Activated CD4-positive, alpha-beta T cell treated with anti-CD3 and anti-CD28 coated beads for 36 hours (primary cell): ENCODE measurements at regions of chr11 and their contacts with region 1.

Region 1: DNA sequence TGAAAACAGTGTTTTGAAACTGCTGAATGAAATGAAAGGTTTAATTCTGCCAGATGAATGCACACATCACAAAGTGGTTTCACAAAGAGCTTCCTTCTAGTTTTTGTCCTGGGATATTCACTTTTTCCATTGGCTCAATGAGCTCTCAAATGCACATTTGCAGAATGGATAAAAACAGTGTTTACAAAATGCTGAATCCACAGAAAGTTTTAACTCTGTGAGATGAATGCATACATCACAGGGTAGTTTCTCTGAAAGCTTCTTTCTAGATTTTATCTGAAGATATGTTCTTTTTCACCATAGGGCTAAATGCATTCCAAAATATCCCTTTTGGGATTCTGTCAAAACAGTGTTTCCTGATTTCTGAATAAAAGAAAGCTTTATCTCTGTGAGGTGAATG is 237.6 kb downstream of the OR4A5 start:
- DNase-seq: no peak
- ATAC-seq: no peak
- H3K4me3 Mint-ChIP-seq: no peak overlapping the region
- H3K27ac Mint-ChIP-seq: no peak overlapping the region
- H3K4me1 Mint-ChIP-seq: no peaks in the 10 kb centered on the region
- H3K27me3 Mint-ChIP-seq: no peaks in the 10 kb centered on the region

Region 2: GRCh38 chr11:54558919-54559318 is 385.3 kb before region 1 on chr11:
- CTCF ChIA-PET with region 1: no interaction called
- POLR2A ChIA-PET with region 1: no interaction called
- intact Hi-C with region 1: no loop called
- DNase-seq: no peak
- ATAC-seq: no peak
- H3K4me3 Mint-ChIP-seq: no peak overlapping the region
- H3K27ac Mint-ChIP-seq: no peak overlapping the region
- H3K4me1 Mint-ChIP-seq: no peaks in the 10 kb centered on the region
- H3K27me3 Mint-ChIP-seq: no peaks in the 10 kb centered on the region

Region 3: GRCh38 chr11:54985731-54986130 is 41.5 kb after region 1 on chr11:
- CTCF ChIA-PET with region 1: no interaction called
- POLR2A ChIA-PET with region 1: no interaction called
- intact Hi-C with region 1: loop called in 1 of 2 experiments (anchors 5 kb)
- DNase-seq: no peak
- ATAC-seq: no peak
- H3K4me3 Mint-ChIP-seq: no peak overlapping the region
- H3K27ac Mint-ChIP-seq: no peak overlapping the region
- H3K4me1 Mint-ChIP-seq: no peaks in the 10 kb centered on the region
- H3K27me3 Mint-ChIP-seq: no peaks in the 10 kb centered on the region

Region 4: DNA sequence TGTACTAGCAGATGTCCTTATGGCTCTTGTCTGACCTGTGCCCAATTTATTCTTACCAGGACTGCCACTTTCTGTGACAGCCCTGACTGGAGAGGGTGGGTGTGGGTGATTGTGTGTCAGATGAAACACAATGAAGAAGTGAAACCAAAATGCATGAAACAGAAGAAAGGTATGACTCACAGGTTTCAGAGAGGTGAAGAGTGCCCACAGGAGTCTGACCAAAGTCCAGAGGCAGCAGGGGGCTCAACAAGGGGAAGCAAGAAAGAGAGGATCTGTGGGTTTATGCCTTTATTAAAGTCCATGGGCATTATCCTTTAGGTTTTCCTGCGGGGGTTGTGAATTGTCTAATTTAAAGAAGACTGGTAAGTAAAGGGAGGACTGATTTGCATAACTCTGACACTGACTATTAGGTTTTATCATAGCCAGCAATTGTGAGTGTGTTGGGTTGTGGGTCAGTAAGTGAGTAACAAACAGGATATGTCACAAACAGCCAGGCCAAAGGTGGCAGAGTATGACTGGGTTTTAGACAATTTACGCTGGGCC is 713.9 kb after region 1 on chr11:
- CTCF ChIA-PET with region 1: no interaction called
- POLR2A ChIA-PET with region 1: no interaction called
- intact Hi-C with region 1: no loop called
- DNase-seq: no peak
- ATAC-seq: no peak
- H3K4me3 Mint-ChIP-seq: no peak overlapping the region
- H3K27ac Mint-ChIP-seq: no peak overlapping the region
- H3K4me1 Mint-ChIP-seq: no peaks in the 10 kb centered on the region
- H3K27me3 Mint-ChIP-seq: no peaks in the 10 kb centered on the region